ENCODE measurements at regions of chr2 and their contacts with region 1.

Region 1: GRCh38 chr2:151716721-151717120 is 17.6 kb downstream of the NEB start:
- DNase-seq: no peak
- H3K4me3 ChIP-seq: no peak overlapping the region
- H3K27ac ChIP-seq: no peak overlapping the region
- H3K4me1 ChIP-seq: no peaks in the 10 kb centered on the region
- H3K27me3 ChIP-seq: no peaks in the 10 kb centered on the region
- CTCF ChIP-seq: no peak
- POLR2A ChIP-seq: no peak

Region 2: GRCh38 chr2:151760139-151760650 is 43.5 kb after region 1 on chr2:
- intact Hi-C with region 1: no loop called
- DNase-seq: no peak
- H3K4me3 ChIP-seq: no peak overlapping the region
- H3K27ac ChIP-seq: no peak overlapping the region
- H3K4me1 ChIP-seq: no peaks in the 10 kb centered on the region
- H3K27me3 ChIP-seq: no peaks in the 10 kb centered on the region
- CTCF ChIP-seq: no peak
- POLR2A ChIP-seq: no peak

Region 3: GRCh38 chr2:153710128-153710527 is 1993.4 kb after region 1 on chr2:
- intact Hi-C with region 1: loop called (anchors 5 kb)
- DNase-seq: no peak
- H3K4me3 ChIP-seq: no peak overlapping the region
- H3K27ac ChIP-seq: no peak overlapping the region
- H3K4me1 ChIP-seq: no peaks in the 10 kb centered on the region
- H3K27me3 ChIP-seq: no peaks in the 10 kb centered on the region
- CTCF ChIP-seq: no peak
- POLR2A ChIP-seq: no peak